Left lung (tissue), 14 donors: ENCODE measurements at regions of chr5 and their contacts with region 1.

Region 1: DNA sequence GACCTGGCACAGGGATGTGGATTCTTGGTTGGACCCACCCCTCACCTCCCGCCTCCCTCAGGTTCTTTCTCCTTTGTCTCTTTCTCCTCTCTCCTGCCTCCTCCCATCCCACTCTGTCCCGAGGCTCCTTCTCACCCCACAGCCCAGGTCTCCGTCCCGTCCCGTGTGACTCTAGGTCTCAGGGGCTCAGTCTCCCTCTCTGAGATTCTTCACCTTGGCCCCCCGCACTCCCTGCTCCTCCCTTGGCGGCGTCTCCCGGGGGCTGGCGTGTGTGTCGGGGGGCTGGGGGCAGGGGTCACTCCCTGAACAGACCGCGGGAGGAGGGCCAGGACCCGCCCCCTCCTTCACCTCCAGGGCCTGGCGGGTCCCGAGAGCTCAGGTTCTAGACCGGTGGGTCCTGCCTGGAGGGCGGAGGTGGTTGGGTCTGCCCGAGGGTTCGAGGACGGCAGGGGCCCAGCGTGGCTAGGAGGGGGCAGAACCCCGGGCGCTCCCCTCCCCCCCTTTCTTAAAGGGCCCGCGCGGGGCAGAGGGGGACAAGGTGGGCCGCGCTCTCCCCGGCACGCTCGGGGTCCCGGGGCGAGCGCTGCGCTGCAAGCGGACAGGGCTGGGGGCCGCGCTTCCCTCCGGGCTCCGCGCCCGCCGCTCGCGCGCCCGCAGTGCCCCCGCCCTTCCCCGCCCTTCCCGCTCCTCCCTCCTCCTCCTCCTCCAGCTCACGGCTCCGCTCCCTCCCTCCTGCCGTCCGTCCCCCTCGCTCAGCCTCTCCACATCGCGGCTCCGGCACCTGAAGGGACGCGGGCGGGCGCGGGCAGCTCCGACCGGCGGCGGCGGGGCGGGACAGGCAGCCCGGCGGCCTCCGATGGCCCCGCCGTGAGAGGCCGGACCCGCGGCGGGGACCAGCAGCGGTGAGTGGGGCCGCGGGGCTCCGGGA is at the start of gene PSD2:
- DNase-seq: peak in 1 of 4 donors; percentile 61
- ATAC-seq: peak; percentile 41
- H3K4me3 ChIP-seq: peak within 1 kb of the TSS; percentile 7 to 18
- H3K27ac ChIP-seq: no peak within 1 kb of the TSS
- H3K4me1 ChIP-seq: peaks cover 0 to 12% of the 10 kb centered on the region in 2 donors
- H3K27me3 ChIP-seq: peaks cover 34 to 74% of the 10 kb centered on the region in 2 donors
- CTCF ChIP-seq: no peak
- polyA plus RNA-seq, gene PSD2: 1.2 to 2.5 (median 1.8) TPM

Region 2: GRCh38 chr5:139844472-139845145 is 49.3 kb after region 1 on chr5:
- intact Hi-C with region 1: loop called in 1 of 2 experiments (anchors 10 kb)
- DNase-seq: peak; percentile 35 to 82 (median 67)
- ATAC-seq: peak; percentile 72
- H3K4me3 ChIP-seq: no peak overlapping the region
- H3K27ac ChIP-seq: no peak overlapping the region
- H3K4me1 ChIP-seq: peaks cover 0 to 14% of the 10 kb centered on the region in 2 donors
- H3K27me3 ChIP-seq: peaks cover 0 to 59% of the 10 kb centered on the region in 2 donors
- CTCF ChIP-seq: peak; percentile 49 to 75

Region 3: DNA sequence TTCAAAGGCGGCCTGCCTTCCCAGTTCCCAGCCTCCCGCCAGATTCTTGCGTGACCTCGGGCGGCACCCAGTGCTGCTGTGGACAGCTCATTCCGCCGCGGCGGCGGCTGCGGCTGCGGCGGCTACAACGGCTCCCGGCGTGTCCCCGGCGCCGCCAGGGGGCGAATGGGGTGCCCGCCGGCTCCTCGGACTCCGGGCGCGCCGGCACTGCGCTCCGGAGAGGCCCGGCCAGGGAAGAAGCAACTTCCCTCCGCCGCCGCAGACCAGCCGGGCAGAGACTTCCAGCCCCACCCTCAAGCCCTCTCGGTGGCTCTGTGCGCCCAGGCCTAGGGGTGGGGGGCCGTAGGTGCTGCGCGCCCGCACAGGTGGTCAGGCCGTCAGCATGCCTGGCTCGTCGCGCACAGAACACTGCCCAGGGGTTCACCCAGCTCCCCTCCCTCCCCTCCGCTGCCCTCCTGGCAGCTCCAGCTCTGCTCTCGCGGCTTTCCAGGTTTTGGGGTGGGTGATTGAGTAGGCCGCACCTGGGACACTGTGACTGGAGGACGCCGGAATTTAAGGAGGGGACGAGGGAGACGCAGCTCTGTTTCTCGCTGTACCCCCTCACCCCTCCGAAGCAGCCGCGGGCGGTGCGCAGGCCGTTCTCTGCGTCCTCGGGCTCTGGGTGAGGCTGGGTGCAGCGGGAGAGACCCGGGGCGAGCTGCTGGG is 350.6 kb after region 1 on chr5:
- intact Hi-C with region 1: loop called in 1 of 2 experiments (anchors 10 kb)
- DNase-seq: peak; percentile 57 to 94 (median 72)
- ATAC-seq: peak; percentile 96
- H3K4me3 ChIP-seq: peak overlapping the region; percentile 17 to 27
- H3K27ac ChIP-seq: peak overlapping the region in 1 of 2 donors; percentile 37
- H3K4me1 ChIP-seq: peaks cover 12 to 22% of the 10 kb centered on the region in 2 donors
- H3K27me3 ChIP-seq: peaks cover 0 to 31% of the 10 kb centered on the region in 2 donors
- CTCF ChIP-seq: peak; percentile 69 to 91